Activated CD8-positive, alpha-beta T cell treated with anti-CD3 and anti-CD28 coated beads, Interleukin-2, amount 10 ng/mL, durations not matched to agents 7 days and 5 days (primary cell): ENCODE measurements at regions of chr1 and their contacts with region 1.

Region 1: GRCh38 chr1:153572569-153573015 is 6.9 kb upstream of the S100A2 start:
- DNase-seq: peak; percentile 65
- ATAC-seq: peak; percentile 78
- H3K4me3 Mint-ChIP-seq: no peak overlapping the region
- H3K27ac Mint-ChIP-seq: no peak overlapping the region
- H3K4me1 Mint-ChIP-seq: peaks cover 33% of the 10 kb centered on the region
- H3K27me3 Mint-ChIP-seq: peaks cover 17% of the 10 kb centered on the region

Region 2: DNA sequence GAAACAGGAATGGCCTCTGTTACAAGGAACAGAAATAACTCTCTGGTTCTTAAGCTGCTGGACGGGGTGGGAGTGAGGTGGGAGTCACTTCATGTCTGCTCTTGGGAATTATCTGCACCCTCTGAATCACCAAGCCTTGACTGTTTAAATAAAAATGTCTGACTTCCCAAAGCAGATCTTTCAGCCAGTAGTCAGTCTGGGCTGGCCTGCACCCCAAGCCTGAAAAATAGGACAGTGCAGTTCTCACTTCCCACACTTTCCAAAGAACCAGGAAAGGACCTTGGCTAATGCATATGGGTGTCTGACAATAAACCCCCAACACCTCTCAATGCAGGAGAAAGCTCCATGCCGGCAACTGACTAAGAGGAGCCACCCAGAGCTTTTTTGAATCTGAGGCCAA is 112.9 kb before region 1 on chr1:
- CTCF ChIA-PET with region 1: no interaction called
- POLR2A ChIA-PET with region 1: no interaction called
- DNase-seq: no peak
- ATAC-seq: no peak
- H3K4me3 Mint-ChIP-seq: no peak overlapping the region
- H3K27ac Mint-ChIP-seq: no peak overlapping the region
- H3K4me1 Mint-ChIP-seq: no peaks in the 10 kb centered on the region
- H3K27me3 Mint-ChIP-seq: peaks cover 3% of the 10 kb centered on the region

Region 3: GRCh38 chr1:153526132-153526543 is 46.5 kb before region 1 on chr1:
- CTCF ChIA-PET with region 1: interaction called, 245 read pairs
- POLR2A ChIA-PET with region 1: no interaction called
- DNase-seq: no peak
- ATAC-seq: no peak
- H3K4me3 Mint-ChIP-seq: no peak overlapping the region
- H3K27ac Mint-ChIP-seq: no peak overlapping the region
- H3K4me1 Mint-ChIP-seq: peaks cover 16% of the 10 kb centered on the region
- H3K27me3 Mint-ChIP-seq: no peaks in the 10 kb centered on the region

Region 4: DNA sequence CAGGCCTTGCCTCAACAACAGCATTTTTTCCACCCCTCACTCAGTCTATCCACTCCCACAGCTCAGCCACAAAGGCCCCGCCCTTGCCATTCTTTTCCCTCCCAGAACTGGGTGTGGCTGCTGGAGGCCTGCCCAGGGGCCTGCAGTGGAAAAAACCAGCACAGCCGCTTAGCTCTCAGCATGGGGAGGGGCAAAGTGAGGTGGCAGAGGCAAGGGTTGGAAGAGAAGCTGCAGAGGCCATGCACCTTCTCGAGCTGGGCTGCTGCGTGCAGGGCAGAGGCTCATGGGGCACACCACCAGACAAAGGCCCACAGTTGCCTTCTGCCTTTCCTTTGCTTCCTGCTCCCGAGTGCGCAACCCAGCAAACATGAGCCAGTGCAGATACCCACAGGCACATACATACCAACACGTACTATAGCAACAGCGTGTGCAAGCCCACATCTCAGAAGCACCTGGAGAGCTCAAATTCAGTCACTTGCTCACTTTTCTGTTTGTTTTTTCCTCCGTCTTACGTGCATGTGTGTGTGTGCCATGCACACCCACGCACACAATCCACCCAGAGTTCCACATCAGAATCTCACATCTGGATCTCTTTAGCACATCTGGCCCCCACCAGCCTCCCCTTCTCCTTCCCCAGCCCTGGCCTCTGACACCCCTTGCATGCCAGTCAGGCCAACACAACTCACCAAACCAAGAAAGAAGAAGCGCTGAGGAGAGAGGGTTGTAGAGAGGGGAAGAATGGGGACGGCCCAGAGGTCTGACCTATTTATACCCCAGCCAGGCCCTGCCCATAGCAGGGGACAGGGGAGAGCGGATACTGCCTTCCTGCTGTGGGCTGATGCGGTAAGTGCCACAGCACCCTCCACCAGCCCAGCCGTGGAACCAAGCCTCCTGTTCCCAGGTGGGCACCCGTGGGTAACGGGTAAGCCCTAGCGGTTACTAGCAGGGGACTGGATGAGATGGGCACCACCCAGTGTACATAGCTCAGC is 27.2 kb before region 1 on chr1 and contains the start of gene S100A4:
- CTCF ChIA-PET with region 1: interaction called, 23 read pairs
- POLR2A ChIA-PET with region 1: interaction called, 6 read pairs
- DNase-seq: peak; percentile 95
- ATAC-seq: peak; percentile 84
- H3K4me3 Mint-ChIP-seq: peak within 1 kb of the TSS; percentile 93
- H3K27ac Mint-ChIP-seq: peak within 1 kb of the TSS; percentile 97
- H3K4me1 Mint-ChIP-seq: peaks cover 83% of the 10 kb centered on the region
- H3K27me3 Mint-ChIP-seq: peaks cover 3% of the 10 kb centered on the region
- total RNA-seq, gene S100A4: 628 to 665 TPM

Region 5: DNA sequence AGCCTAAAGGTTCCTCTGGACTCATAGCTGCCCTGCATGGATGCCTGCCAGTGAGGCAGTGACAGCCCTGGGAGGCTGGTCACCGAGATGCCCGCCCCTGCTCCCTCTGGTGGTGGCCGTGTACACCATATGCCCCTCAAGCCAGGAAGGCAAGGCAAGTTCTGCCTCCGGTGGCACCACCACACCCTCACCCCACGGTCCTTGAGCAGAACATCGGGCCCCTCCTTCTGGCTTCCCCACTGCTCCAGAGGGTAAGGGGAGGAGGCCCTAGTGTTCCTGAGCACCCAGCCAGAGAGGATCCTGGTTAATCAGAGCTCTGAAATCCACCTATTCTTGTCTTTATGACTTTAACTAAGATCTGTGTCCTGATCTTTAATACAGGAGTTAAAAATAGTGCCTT is 45.1 kb after region 1 on chr1:
- CTCF ChIA-PET with region 1: interaction called, 115 read pairs
- POLR2A ChIA-PET with region 1: no interaction called
- DNase-seq: peak; percentile 86
- ATAC-seq: peak; percentile 98
- H3K4me3 Mint-ChIP-seq: no peak overlapping the region
- H3K27ac Mint-ChIP-seq: peak overlapping the region; percentile 30
- H3K4me1 Mint-ChIP-seq: peaks cover 9% of the 10 kb centered on the region
- H3K27me3 Mint-ChIP-seq: no peaks in the 10 kb centered on the region

Region 6: GRCh38 chr1:153633716-153634665 is 61.4 kb after region 1 on chr1 and contains the start of gene CHTOP:
- CTCF ChIA-PET with region 1: interaction called, 33 read pairs
- POLR2A ChIA-PET with region 1: interaction called, 8 read pairs
- DNase-seq: peak; percentile 98
- ATAC-seq: peak; percentile 94
- H3K4me3 Mint-ChIP-seq: peak within 1 kb of the TSS; percentile 99
- H3K27ac Mint-ChIP-seq: peak within 1 kb of the TSS; percentile 100
- H3K4me1 Mint-ChIP-seq: peaks cover 39% of the 10 kb centered on the region
- H3K27me3 Mint-ChIP-seq: no peaks in the 10 kb centered on the region
- total RNA-seq, gene CHTOP: 81.9 to 82.0 TPM

Region 7: GRCh38 chr1:153880962-153881361 is 308.4 kb after region 1 on chr1:
- CTCF ChIA-PET with region 1: no interaction called
- POLR2A ChIA-PET with region 1: no interaction called
- DNase-seq: no peak
- ATAC-seq: no peak
- H3K4me3 Mint-ChIP-seq: no peak overlapping the region
- H3K27ac Mint-ChIP-seq: no peak overlapping the region
- H3K4me1 Mint-ChIP-seq: peaks cover 4% of the 10 kb centered on the region
- H3K27me3 Mint-ChIP-seq: no peaks in the 10 kb centered on the region